CD8-positive, alpha-beta T cell (primary cell): ENCODE measurements at regions of chr11 and their contacts with region 1.

Region 1: GRCh38 chr11:72471005-72471898 is 36.9 kb upstream of the CLPB start:
- DNase-seq: peak; percentile 28 to 79 (median 51)
- ATAC-seq: peak; percentile 88
- H3K4me3 ChIP-seq: no peak overlapping the region
- H3K4me3 Mint-ChIP-seq: no peak overlapping the region
- H3K27ac ChIP-seq: no peak overlapping the region
- H3K27ac Mint-ChIP-seq: no peak overlapping the region
- H3K4me1 ChIP-seq: peaks cover 3% of the 10 kb centered on the region
- H3K4me1 Mint-ChIP-seq: peaks cover 4% of the 10 kb centered on the region
- H3K27me3 ChIP-seq: no peaks in the 10 kb centered on the region
- H3K27me3 Mint-ChIP-seq: peaks cover 23% of the 10 kb centered on the region
- CTCF ChIP-seq: peak; percentile 71

Region 2: GRCh38 chr11:72483412-72484186 is 12.3 kb after region 1 on chr11:
- CTCF ChIA-PET with region 1: interaction called, 10 read pairs
- POLR2A ChIA-PET with region 1: no interaction called
- intact Hi-C with region 1: no loop called
- DNase-seq: peak in 2 of 9 experiments; percentile 25 to 50
- ATAC-seq: no peak
- H3K4me3 ChIP-seq: no peak overlapping the region
- H3K4me3 Mint-ChIP-seq: no peak overlapping the region
- H3K27ac ChIP-seq: no peak overlapping the region
- H3K27ac Mint-ChIP-seq: no peak overlapping the region
- H3K4me1 ChIP-seq: no peaks in the 10 kb centered on the region
- H3K4me1 Mint-ChIP-seq: peaks cover 11% of the 10 kb centered on the region
- H3K27me3 ChIP-seq: no peaks in the 10 kb centered on the region
- H3K27me3 Mint-ChIP-seq: peaks cover 3% of the 10 kb centered on the region
- CTCF ChIP-seq: no peak

Region 3: DNA sequence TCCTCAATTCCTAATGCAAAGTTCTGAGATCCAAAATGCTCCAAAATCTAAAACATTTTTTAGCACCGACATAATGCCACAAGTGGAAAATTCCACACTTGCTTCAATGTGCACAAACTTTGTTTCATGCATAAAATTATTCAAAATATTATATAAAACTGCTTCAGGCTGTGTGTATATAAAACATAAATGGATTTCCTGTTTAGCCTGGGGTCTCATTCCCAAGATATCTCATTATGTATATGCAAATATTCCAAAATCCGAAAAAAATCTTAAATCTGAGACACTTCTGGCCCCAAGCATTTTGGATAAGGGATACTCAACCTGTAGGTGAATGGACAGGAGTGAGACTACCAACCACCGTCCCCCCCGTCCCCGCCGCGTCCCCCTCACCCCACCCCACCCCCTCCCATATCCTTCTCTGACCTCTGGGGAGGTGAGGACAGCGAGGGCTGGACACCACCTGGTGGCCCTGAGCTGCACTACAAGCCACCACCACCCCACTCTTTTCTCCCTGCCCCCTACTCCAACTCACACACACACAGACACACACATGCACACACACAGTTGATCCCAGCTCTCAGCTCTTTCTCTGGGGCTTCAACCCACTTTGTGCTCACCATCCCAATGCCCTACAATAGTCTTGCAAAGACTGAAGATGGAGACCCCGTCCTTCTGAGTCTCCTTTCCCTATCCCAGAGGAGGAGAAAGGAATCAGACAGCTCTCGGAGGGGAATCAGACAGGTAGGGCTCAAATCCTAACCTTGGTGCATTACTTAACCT is 102.0 kb after region 1 on chr11:
- CTCF ChIA-PET with region 1: interaction called, 12 read pairs
- POLR2A ChIA-PET with region 1: no interaction called
- intact Hi-C with region 1: loop called (anchors 1 kb)
- DNase-seq: peak in 2 of 9 experiments; percentile 55 to 62
- ATAC-seq: peak; percentile 58
- H3K4me3 ChIP-seq: no peak overlapping the region
- H3K4me3 Mint-ChIP-seq: no peak overlapping the region
- H3K27ac ChIP-seq: no peak overlapping the region
- H3K27ac Mint-ChIP-seq: no peak overlapping the region
- H3K4me1 ChIP-seq: no peaks in the 10 kb centered on the region
- H3K4me1 Mint-ChIP-seq: peaks cover 3% of the 10 kb centered on the region
- H3K27me3 ChIP-seq: no peaks in the 10 kb centered on the region
- H3K27me3 Mint-ChIP-seq: peaks cover 24% of the 10 kb centered on the region
- CTCF ChIP-seq: no peak

Region 4: GRCh38 chr11:72642884-72643511 is 171.7 kb after region 1 on chr11:
- CTCF ChIA-PET with region 1: interaction called, 21 read pairs
- POLR2A ChIA-PET with region 1: no interaction called
- intact Hi-C with region 1: loop called (anchors 1 kb)
- DNase-seq: peak; percentile 40 to 80 (median 56)
- ATAC-seq: peak; percentile 86
- H3K4me3 ChIP-seq: peak overlapping the region; percentile 51 to 54
- H3K4me3 Mint-ChIP-seq: peak overlapping the region; percentile 77
- H3K27ac ChIP-seq: no peak overlapping the region
- H3K27ac Mint-ChIP-seq: no peak overlapping the region
- H3K4me1 ChIP-seq: peaks cover 3% of the 10 kb centered on the region
- H3K4me1 Mint-ChIP-seq: peaks cover 2% of the 10 kb centered on the region
- H3K27me3 ChIP-seq: peaks cover 8 to 22% of the 10 kb centered on the region in 2 experiments
- H3K27me3 Mint-ChIP-seq: peaks cover 5% of the 10 kb centered on the region
- CTCF ChIP-seq: peak; percentile 95